ENCODE measurements at regions of chr18 and their contacts with region 1.

Region 1: DNA sequence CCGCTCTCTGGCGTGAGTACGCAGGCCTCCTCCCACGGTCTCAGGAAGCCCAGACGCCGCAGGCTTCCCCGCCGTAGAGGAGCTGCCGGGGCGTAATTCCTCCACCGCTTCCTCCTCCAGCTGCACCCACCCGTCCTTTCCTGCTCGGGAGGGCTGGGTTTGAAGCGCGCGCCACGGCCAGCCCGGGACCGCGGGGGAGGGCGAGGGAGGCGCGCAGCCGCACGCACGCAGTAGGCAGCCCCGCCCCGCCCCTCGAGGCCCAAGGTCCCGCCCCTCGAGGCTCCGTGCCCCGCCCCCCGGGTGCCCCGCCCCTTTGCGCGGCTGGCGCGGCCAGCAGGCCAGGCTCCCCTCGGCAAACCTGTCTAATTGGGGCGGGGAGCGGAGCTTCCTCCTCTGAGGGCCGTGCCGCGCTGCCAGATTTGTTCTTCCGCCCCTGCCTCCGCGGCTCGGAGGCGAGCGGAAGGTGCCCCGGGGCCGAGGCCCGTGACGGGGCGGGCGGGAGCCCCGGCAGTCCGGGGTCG is at the start of gene MALT1:
- DNase-seq: peak; percentile 85
- ATAC-seq: peak; percentile 93
- H3K4me3 ChIP-seq: peak within 1 kb of the TSS; percentile 93
- H3K27ac ChIP-seq: peak within 1 kb of the TSS; percentile 79
- H3K4me1 ChIP-seq: peaks cover 14% of the 10 kb centered on the region
- H3K27me3 ChIP-seq: no peaks in the 10 kb centered on the region
- CTCF ChIP-seq: no peak
- POLR2A ChIP-seq: peak; percentile 89
- RAD21 ChIP-seq: no peak
- total RNA-seq, gene MALT1: 25.3 and 25.8 TPM in 2 replicates

Region 2: DNA sequence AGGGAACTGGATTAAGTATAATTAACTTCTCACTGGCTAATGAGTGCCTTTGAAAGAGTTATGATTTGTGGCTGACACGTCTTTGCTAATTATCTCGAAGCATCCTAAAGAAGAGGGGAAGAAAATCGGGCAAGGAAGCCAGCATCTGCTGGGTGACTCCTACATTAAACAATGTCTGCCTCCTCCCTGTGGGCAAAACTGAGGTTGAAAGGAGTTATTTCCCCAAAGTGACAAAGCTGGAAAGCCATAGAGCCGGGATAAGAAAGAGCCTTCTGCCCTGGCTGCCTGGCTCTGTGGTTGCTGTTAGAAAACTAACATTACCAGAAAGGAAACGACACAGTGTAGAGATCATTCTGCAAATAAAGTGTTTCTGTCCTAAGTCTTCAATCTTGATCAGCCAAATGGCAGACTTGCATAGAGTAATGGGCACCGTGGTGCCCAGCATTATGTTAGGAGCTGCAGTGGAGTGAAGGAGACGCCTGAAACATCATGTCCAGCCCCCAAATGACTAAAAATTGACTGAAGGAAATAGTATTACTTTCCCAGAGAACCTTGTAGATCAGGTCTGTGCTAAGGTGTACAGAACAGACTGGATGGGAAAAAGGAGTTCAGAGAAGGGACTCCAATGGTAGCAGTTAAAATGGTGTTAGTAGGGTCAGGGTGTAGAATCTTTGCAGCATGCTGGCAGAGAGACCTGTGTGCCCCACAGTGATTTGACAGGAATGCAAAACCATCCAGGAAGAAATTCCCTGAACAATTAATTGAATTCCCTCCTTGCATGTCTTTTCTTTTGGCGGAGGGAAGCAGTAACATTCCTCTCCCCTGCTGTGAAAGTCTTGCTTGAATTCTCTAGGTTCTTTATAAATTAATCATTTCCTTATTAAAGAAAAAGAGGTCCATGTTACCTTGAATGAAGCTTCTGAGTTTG is 86.7 kb before region 1 on chr18:
- CTCF ChIA-PET with region 1: no interaction called
- POLR2A ChIA-PET with region 1: interaction called, 4 read pairs
- dilution Hi-C with region 1: no loop called
- in situ Hi-C with region 1: loop called (anchors 5 kb)
- intact Hi-C with region 1: loop called (anchors 1 kb)
- DNase-seq: peak; percentile 48
- ATAC-seq: peak; percentile 22
- H3K4me3 ChIP-seq: no peak overlapping the region
- H3K27ac ChIP-seq: peak overlapping the region; percentile 53
- H3K4me1 ChIP-seq: peaks cover 21% of the 10 kb centered on the region
- H3K27me3 ChIP-seq: no peaks in the 10 kb centered on the region
- CTCF ChIP-seq: 0 out of 2 replicates have a peak, but pooled peaks have one; percentile 16
- POLR2A ChIP-seq: no peak
- RAD21 ChIP-seq: peak; percentile 34; the same call in 1 of the 2 replicates

Region 3: DNA sequence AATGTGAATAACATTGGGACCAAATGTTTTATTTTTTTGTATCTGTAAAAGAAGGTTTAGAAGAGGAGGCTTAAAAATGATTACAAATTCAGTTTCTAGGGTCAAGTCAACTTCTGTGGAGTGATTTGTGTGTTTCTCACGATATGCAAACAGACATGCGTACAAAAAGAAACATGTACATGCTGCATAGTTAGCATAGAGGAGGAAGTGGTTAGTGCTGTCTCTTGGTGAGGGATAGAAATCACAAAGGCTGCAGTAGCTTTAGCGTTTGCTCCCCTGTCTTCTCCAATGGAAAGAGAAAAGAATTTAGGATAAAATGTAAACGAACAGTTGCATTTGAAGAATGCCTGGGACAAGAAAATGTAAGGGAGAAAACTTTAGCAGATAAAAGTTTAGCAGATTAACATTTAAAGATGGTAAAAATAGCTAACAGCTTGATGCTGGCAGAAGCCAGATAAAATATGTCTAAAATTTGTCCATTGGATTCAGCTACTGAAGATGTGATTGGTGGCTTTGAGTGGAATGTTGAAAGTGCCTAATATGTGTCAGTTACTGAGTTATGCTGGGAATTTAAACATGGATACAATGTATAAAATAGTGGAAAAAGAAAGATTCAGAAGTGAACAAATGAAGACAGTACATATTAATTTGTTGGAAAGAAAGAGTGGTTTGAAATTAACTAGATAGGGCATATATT is 45.0 kb after region 1 on chr18:
- CTCF ChIA-PET with region 1: no interaction called
- POLR2A ChIA-PET with region 1: no interaction called
- dilution Hi-C with region 1: no loop called
- in situ Hi-C with region 1: no loop called
- intact Hi-C with region 1: loop called (anchors 5 kb)
- DNase-seq: peak; percentile 56
- ATAC-seq: peak; percentile 91
- H3K4me3 ChIP-seq: no peak overlapping the region
- H3K27ac ChIP-seq: no peak overlapping the region
- H3K4me1 ChIP-seq: peaks cover 5% of the 10 kb centered on the region; the same call in 1 of the 2 replicates
- H3K27me3 ChIP-seq: no peaks in the 10 kb centered on the region
- CTCF ChIP-seq: no peak
- POLR2A ChIP-seq: no peak
- RAD21 ChIP-seq: no peak

Region 4: GRCh38 chr18:58745914-58746313 is 74.7 kb after region 1 on chr18:
- CTCF ChIA-PET with region 1: no interaction called
- POLR2A ChIA-PET with region 1: interaction called, 13 read pairs
- dilution Hi-C with region 1: no loop called
- in situ Hi-C with region 1: no loop called
- intact Hi-C with region 1: no loop called
- DNase-seq: no peak
- ATAC-seq: no peak
- H3K4me3 ChIP-seq: no peak overlapping the region
- H3K27ac ChIP-seq: no peak overlapping the region
- H3K4me1 ChIP-seq: no peaks in the 10 kb centered on the region
- H3K27me3 ChIP-seq: no peaks in the 10 kb centered on the region
- CTCF ChIP-seq: no peak
- POLR2A ChIP-seq: no peak
- RAD21 ChIP-seq: no peak

Region 5: GRCh38 chr18:58768293-58768974 is 97.3 kb after region 1 on chr18:
- CTCF ChIA-PET with region 1: no interaction called
- POLR2A ChIA-PET with region 1: no interaction called
- dilution Hi-C with region 1: no loop called
- in situ Hi-C with region 1: no loop called
- intact Hi-C with region 1: loop called (anchors 2 kb)
- DNase-seq: peak; percentile 48
- ATAC-seq: peak; percentile 92
- H3K4me3 ChIP-seq: 0 out of 2 replicates have a peak overlapping the region, but pooled peaks have one; percentile 20
- H3K27ac ChIP-seq: no peak overlapping the region
- H3K4me1 ChIP-seq: peaks cover 4% of the 10 kb centered on the region; the same call in 1 of the 2 replicates
- H3K27me3 ChIP-seq: peaks cover 28% of the 10 kb centered on the region
- CTCF ChIP-seq: peak; percentile 79
- POLR2A ChIP-seq: no peak
- RAD21 ChIP-seq: peak; percentile 87

Region 6: DNA sequence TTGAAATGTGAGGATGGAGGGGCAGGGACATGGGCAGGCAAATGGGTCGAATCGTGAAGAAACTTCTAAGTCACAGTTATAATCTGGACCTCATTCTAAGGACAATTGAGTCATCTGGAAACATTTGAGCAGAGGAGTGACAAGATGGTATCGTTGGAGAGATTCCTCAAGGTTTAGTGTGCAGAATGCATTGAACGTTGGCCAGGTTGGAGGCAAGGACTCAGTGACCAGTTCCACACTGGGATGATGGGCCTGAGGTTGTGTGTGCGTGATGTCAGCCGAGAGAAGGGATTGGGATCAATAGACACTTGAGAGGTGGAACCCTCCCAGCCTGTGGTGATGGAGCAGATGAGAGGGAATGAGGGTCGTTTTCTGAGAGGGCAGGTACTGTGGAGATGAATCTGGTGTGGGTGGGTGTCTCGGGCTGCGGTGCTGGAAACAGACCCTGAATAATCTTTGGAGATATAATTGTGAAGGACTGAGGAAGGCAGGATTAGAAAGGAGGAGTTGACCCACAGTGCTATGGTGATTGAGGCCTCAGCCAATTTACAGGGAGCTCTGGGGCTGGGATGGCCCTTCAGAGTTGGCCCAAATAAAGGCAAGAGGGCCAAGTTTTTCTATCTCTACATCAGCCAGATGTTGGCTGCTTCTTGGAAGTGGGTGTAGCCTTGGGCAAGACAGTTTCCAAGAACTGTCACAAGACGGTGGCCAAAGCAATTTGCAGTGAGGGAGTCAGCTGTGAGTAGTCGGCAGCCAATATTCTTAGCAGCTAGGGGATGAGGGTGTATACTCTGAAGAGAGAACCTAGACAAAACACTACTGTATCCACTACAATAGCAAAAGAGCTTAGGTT is 187.7 kb after region 1 on chr18:
- CTCF ChIA-PET with region 1: no interaction called
- POLR2A ChIA-PET with region 1: no interaction called
- dilution Hi-C with region 1: no loop called
- in situ Hi-C with region 1: no loop called
- intact Hi-C with region 1: no loop called
- DNase-seq: no peak
- ATAC-seq: no peak
- H3K4me3 ChIP-seq: no peak overlapping the region
- H3K27ac ChIP-seq: no peak overlapping the region
- H3K4me1 ChIP-seq: peaks cover 17% of the 10 kb centered on the region
- H3K27me3 ChIP-seq: no peaks in the 10 kb centered on the region
- CTCF ChIP-seq: no peak
- POLR2A ChIP-seq: no peak
- RAD21 ChIP-seq: no peak

Region 7: GRCh38 chr18:59690996-59691395 is 1019.8 kb after region 1 on chr18:
- CTCF ChIA-PET with region 1: no interaction called
- POLR2A ChIA-PET with region 1: no interaction called
- dilution Hi-C with region 1: no loop called
- in situ Hi-C with region 1: no loop called
- intact Hi-C with region 1: no loop called
- DNase-seq: peak; percentile 91
- ATAC-seq: peak; percentile 80
- H3K4me3 ChIP-seq: no peak overlapping the region
- H3K27ac ChIP-seq: no peak overlapping the region
- H3K4me1 ChIP-seq: peaks cover 22% of the 10 kb centered on the region
- H3K27me3 ChIP-seq: no peaks in the 10 kb centered on the region
- CTCF ChIP-seq: no peak
- POLR2A ChIP-seq: no peak
- RAD21 ChIP-seq: no peak